ENCODE measurements at regions of chr3 and their contacts with region 1.

Region 1: DNA sequence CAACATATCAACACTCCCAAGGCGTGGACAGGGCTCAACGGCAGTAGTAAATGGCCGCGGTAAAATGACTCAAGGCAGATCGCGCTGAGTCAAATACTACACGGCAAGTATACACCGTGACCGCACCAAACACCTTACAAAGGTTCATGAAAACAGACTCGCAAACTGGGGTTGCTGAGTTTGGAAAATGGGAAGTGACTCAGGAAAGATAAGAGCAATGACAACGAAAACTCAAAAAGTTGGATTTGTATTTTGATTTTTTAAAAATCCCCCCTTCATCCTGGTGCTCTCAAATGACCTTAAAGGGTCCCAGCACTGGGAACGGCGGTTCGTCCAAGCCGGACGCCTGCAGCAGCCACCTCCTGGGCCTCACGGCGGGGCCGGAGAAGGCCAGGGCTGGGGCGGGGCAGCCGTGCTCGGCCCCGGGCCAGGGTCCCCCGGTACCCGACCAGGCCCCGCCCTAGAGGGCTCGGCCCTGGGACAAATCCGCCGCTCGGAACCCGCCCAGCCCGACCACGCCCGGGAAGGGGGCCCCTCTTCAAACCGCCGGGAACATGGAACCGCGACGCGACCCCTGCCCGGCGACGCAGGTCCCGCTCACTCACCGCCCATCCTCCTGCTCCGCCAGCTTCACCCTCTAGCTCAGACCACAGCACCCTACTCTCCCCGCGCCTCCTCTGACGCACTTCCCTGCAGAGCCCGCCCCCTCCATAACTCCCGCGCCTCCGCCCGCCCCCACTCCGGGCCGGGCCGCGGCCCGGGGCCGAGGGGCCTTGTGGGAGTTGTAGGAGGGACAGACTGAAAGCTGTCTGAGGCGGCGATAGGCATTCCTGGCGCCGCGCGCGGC is at the start of gene CLDND1:
- DNase-seq: peak; percentile 92 to 97 (median 95)
- ATAC-seq: peak; percentile 95 to 99 (median 97)
- H3K4me3 ChIP-seq: peak within 1 kb of the TSS; percentile 71 to 92
- H3K4me3 Mint-ChIP-seq: peak within 1 kb of the TSS; percentile 77 to 95 (median 94)
- H3K27ac ChIP-seq: peak within 1 kb of the TSS; percentile 79
- H3K27ac Mint-ChIP-seq: peak within 1 kb of the TSS; percentile 95 to 97
- H3K4me1 ChIP-seq: peaks cover 11 to 23% of the 10 kb centered on the region in 2 experiments
- H3K4me1 Mint-ChIP-seq: peaks cover 50 to 60% (median 51%) of the 10 kb centered on the region in 3 donors
- H3K27me3 ChIP-seq: no peaks in the 10 kb centered on the region
- H3K27me3 Mint-ChIP-seq: no peaks in the 10 kb centered on the region
- total RNA-seq, gene CLDND1: 133 to 404 (median 264) TPM

Region 2: GRCh38 chr3:98581474-98581873 is 59.0 kb after region 1 on chr3:
- CTCF ChIA-PET with region 1: no interaction called
- POLR2A ChIA-PET with region 1: no interaction called
- DNase-seq: no peak
- ATAC-seq: no peak
- H3K4me3 ChIP-seq: no peak overlapping the region
- H3K4me3 Mint-ChIP-seq: no peak overlapping the region
- H3K27ac ChIP-seq: no peak overlapping the region
- H3K27ac Mint-ChIP-seq: peak overlapping the region; percentile 29 to 53
- H3K4me1 ChIP-seq: no peaks in the 10 kb centered on the region
- H3K4me1 Mint-ChIP-seq: peaks cover 7 to 29% (median 26%) of the 10 kb centered on the region in 3 donors
- H3K27me3 ChIP-seq: no peaks in the 10 kb centered on the region
- H3K27me3 Mint-ChIP-seq: no peaks in the 10 kb centered on the region

Region 3: GRCh38 chr3:98593046-98593936 is 70.8 kb after region 1 on chr3 and contains the start of gene CPOX:
- CTCF ChIA-PET with region 1: interaction called in 1 of 2 experiments, 15 read pairs
- POLR2A ChIA-PET with region 1: interaction called in 1 of 2 experiments, 3 read pairs
- DNase-seq: peak; percentile 59 to 85 (median 75)
- ATAC-seq: peak; percentile 95 to 98 (median 96)
- H3K4me3 ChIP-seq: peak within 1 kb of the TSS; percentile 61 to 84
- H3K4me3 Mint-ChIP-seq: peak within 1 kb of the TSS; percentile 93 to 96 (median 93)
- H3K27ac ChIP-seq: peak within 1 kb of the TSS; percentile 60
- H3K27ac Mint-ChIP-seq: peak within 1 kb of the TSS; percentile 93 to 95
- H3K4me1 ChIP-seq: peaks cover 15 to 17% of the 10 kb centered on the region in 2 experiments
- H3K4me1 Mint-ChIP-seq: peaks cover 32 to 43% (median 38%) of the 10 kb centered on the region in 3 donors
- H3K27me3 ChIP-seq: no peaks in the 10 kb centered on the region
- H3K27me3 Mint-ChIP-seq: no peaks in the 10 kb centered on the region
- total RNA-seq, gene CPOX: 13.9 to 47.6 (median 44.6) TPM

Region 4: DNA sequence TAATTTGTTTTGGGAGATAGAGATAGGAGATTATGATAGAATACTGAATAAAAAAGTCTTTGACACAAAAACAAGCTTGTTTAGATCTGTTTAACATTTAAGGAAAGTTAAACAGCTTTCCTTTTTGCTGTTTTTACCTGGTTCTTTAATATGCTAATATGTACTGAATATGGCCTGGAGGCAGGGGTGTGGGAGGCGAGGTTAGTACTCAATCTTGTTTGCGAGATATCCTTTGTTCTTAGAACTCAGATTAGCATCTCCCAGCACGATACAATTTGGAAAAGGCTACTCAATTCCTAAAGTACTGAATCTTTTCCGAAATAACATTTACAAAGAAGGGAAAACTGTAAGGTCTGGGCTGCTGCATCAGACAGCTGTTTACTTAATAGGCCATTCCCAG is 199.9 kb after region 1 on chr3:
- CTCF ChIA-PET with region 1: no interaction called
- POLR2A ChIA-PET with region 1: no interaction called
- DNase-seq: no peak
- ATAC-seq: no peak
- H3K4me3 ChIP-seq: no peak overlapping the region
- H3K4me3 Mint-ChIP-seq: no peak overlapping the region
- H3K27ac ChIP-seq: no peak overlapping the region
- H3K27ac Mint-ChIP-seq: no peak overlapping the region
- H3K4me1 ChIP-seq: no peaks in the 10 kb centered on the region
- H3K4me1 Mint-ChIP-seq: no peaks in the 10 kb centered on the region
- H3K27me3 ChIP-seq: no peaks in the 10 kb centered on the region
- H3K27me3 Mint-ChIP-seq: peaks cover 8 to 15% of the 10 kb centered on the region in 2 donors